K562 (cell line): ENCODE measurements at regions of chr7 and their contacts with region 1.

Region 1: DNA sequence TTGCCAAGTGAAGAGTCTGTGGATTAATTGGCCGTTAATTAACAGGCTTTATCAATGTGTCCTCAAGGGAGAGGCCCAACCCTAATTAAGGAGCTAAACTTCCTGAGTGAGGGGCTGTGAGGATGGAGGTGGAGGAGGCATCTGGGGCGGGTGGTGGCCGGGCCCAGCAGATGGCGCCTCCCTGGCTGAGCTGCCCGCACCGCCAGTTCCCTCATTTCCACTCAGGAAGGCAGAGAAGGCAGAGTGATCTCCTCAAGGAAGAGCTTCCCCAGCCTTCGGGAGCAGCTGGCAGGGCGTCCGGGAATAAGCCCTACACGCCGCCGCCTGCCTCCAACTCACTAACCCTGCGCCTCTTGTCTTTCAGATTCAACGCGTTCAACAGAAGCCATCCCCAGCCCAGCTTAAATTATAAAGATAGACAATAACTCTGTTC is 112.2 kb downstream of the CYTH3 start:
- DNase-seq: peak in 1 of 4 experiments; percentile 38
- ATAC-seq: peak; percentile 46
- H3K4me3 ChIP-seq: no peak overlapping the region
- H3K27ac ChIP-seq: no peak overlapping the region
- H3K4me1 ChIP-seq: peaks cover 0 to 9% of the 10 kb centered on the region in 2 experiments; a peak in 1 of 5 replicates
- H3K27me3 ChIP-seq: no peaks in the 10 kb centered on the region
- CTCF ChIP-seq: peak; percentile 36 to 43 (median 36); a peak in 5 of 6 replicates
- EP300 ChIP-seq: no peak
- POLR2A ChIP-seq: no peak
- RAD21 ChIP-seq: peak; percentile 19 to 35; a peak in 3 of 4 replicates

Region 2: GRCh38 chr7:6096581-6096980 is 63.6 kb before region 1 on chr7:
- CTCF ChIA-PET with region 1: no interaction called
- POLR2A ChIA-PET with region 1: no interaction called
- in situ Hi-C with region 1: no loop called
- intact Hi-C with region 1: no loop called
- DNase-seq: no peak
- ATAC-seq: no peak
- H3K4me3 ChIP-seq: no peak overlapping the region
- H3K27ac ChIP-seq: no peak overlapping the region
- H3K4me1 ChIP-seq: no peaks in the 10 kb centered on the region; a peak in 2 of 5 replicates
- H3K27me3 ChIP-seq: peaks cover 0 to 6% of the 10 kb centered on the region in 2 experiments; a peak in 1 of 5 replicates
- CTCF ChIP-seq: no peak
- EP300 ChIP-seq: no peak
- POLR2A ChIP-seq: no peak
- RAD21 ChIP-seq: no peak

Region 3: DNA sequence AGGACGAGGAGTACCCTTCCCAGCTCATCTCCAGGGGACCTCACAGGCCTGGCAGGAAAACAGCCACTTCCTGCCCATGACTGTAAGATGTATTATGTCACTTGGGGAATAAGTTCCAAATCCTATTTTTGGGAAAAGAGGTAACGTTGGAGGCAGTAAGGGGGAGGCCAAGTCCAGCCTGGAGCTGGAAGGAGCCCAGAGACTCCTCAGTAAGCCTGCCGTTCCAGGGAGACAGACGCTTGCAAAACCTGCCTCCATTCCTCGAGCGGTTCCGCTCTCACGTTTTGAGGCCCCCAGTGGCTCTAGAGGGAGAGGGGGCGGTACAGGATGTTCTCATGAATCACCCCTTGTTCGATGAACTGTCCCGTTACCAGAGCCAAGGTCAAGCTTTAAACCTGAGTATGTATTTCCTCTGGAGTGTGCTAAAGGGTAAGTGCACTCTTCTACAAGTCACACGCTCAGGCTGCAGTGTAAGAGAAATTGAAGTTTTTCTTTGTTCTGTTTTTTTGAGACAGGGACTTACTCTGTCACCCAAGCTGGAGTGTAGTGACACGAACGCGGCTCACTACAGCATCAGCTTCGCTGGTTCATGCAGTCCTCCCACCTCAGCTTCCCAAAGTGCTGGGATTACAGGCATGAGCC is 157.7 kb after region 1 on chr7:
- CTCF ChIA-PET with region 1: interaction called, 11 read pairs
- POLR2A ChIA-PET with region 1: no interaction called
- in situ Hi-C with region 1: no loop called
- intact Hi-C with region 1: loop called (anchors 1 kb)
- DNase-seq: peak in 1 of 4 experiments; percentile 33
- ATAC-seq: peak; percentile 57
- H3K4me3 ChIP-seq: no peak overlapping the region
- H3K27ac ChIP-seq: no peak overlapping the region
- H3K4me1 ChIP-seq: peaks cover 0 to 3% of the 10 kb centered on the region in 2 experiments; a peak in 1 of 5 replicates
- H3K27me3 ChIP-seq: no peaks in the 10 kb centered on the region
- CTCF ChIP-seq: no peak
- EP300 ChIP-seq: no peak
- POLR2A ChIP-seq: no peak
- RAD21 ChIP-seq: no peak